Activated T-helper 1 cell treated with anti-CD3 and anti-CD28 coated beads, Interleukin-12 subunit alpha, Interleukin-12 subunit beta, Interleukin-2, Interleukin-4 antibody, amounts not matched to agents 30 ng/mL and 10 ng/mL and 1 ng/mL, durations not matched to agents 14 hours and 24 hours and 36 hours (primary cell): ENCODE measurements at regions of chr15 and their contacts with region 1.

Region 1: GRCh38 chr15:98518823-98519561 is 129.3 kb upstream of the IGF1R start:
- DNase-seq: peak; percentile 14
- H3K4me3 Mint-ChIP-seq: no peak overlapping the region
- H3K27ac Mint-ChIP-seq: no peak overlapping the region
- H3K4me1 Mint-ChIP-seq: peaks cover 6% of the 10 kb centered on the region
- H3K27me3 Mint-ChIP-seq: peaks cover 7% of the 10 kb centered on the region

Region 2: GRCh38 chr15:98442379-98442833 is 76.6 kb before region 1 on chr15:
- intact Hi-C with region 1: loop called (anchors 5 kb)
- DNase-seq: peak; percentile 34
- H3K4me3 Mint-ChIP-seq: no peak overlapping the region
- H3K27ac Mint-ChIP-seq: no peak overlapping the region
- H3K4me1 Mint-ChIP-seq: peaks cover 5% of the 10 kb centered on the region
- H3K27me3 Mint-ChIP-seq: peaks cover 5% of the 10 kb centered on the region

Region 3: GRCh38 chr15:98658831-98659699 is 140.1 kb after region 1 on chr15:
- intact Hi-C with region 1: loop called (anchors 1 kb)
- DNase-seq: peak; percentile 9
- H3K4me3 Mint-ChIP-seq: no peak overlapping the region
- H3K27ac Mint-ChIP-seq: no peak overlapping the region
- H3K4me1 Mint-ChIP-seq: peaks cover 5% of the 10 kb centered on the region
- H3K27me3 Mint-ChIP-seq: peaks cover 13% of the 10 kb centered on the region

Region 4: DNA sequence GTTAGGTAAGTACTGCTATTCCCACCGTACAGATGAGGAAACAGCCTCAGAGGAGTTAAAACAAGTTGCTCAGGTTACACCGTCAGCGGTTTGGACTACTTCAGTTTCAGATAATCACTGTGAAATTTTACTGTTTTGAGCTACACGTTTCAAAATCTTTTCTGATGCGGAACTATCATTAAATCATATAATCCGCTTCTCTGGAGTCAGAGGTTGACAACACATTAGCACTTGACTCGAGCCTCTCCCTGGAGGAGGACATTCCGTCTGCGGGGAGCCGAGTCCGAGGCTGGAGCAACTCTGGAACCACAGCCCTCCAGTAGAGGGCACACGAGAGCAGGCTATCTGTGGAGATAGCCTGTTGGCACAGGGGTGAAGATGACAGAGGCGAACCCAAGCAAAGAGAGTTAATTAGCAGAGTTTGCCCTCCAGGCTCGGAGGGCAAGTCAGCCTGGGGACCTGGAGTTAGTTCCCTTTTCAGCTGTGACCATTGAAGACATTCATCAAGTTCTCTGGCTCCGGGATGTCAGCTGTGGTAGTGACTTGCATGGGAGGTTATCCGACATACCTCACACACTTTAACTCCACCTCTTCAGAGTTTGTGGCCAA is 260.6 kb after region 1 on chr15:
- intact Hi-C with region 1: loop called (anchors 1 kb)
- DNase-seq: peak; percentile 49
- H3K4me3 Mint-ChIP-seq: peak overlapping the region; percentile 30
- H3K27ac Mint-ChIP-seq: no peak overlapping the region
- H3K4me1 Mint-ChIP-seq: peaks cover 28% of the 10 kb centered on the region
- H3K27me3 Mint-ChIP-seq: peaks cover 5% of the 10 kb centered on the region

Region 5: GRCh38 chr15:98881526-98882520 is 362.8 kb after region 1 on chr15:
- intact Hi-C with region 1: loop called (anchors 1 kb)
- DNase-seq: no peak
- H3K4me3 Mint-ChIP-seq: no peak overlapping the region
- H3K27ac Mint-ChIP-seq: no peak overlapping the region
- H3K4me1 Mint-ChIP-seq: peaks cover 3% of the 10 kb centered on the region
- H3K27me3 Mint-ChIP-seq: no peaks in the 10 kb centered on the region

Region 6: DNA sequence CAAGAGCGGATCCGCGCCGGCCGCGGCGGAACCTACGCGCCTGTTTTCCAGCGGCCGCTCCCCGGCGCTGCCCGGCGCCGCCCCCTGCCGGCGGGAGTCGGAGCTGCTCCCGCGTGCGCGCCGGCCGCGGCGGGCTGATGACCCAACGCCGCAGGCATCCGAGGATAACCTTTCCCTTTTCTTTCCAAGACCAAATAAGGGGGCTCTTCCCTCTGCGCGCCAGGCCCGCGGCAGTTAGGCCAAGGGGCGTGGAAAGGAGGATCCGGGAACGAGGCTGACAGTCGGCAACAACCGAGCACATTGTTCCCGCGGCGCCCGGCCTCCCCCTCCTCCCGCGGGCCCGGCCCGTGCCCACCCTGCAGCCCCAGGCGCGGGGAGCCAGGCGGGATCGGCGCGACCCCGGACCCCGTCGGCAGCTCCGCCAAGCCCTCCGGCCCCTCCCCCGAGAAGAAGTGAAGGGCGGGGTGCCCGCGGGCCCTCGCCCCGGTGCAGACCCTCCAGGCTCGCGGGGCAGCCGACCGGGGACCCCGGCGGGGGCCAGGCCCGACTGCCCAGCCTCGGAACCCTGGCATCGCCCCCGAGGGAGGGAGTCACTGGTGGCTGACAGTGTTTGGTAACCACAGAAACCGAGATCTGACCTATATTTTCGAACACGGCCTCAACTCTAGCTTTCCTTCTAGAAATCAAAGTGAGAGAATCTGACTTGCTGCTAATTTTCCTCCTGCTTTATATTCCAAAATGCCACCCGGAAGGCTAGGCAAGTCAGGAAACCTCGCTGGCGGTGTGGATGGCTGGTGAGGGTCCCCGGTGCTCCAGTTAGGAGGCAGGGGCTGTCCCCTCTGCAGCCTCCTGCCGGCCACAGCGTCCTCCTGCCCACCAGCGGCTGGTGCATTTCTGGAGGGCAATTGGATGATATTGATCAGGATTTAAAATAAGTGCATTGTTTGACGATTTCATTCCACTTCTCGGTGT is 540.3 kb after region 1 on chr15:
- intact Hi-C with region 1: loop called (anchors 5 kb)
- DNase-seq: peak; percentile 48
- H3K4me3 Mint-ChIP-seq: peak overlapping the region; percentile 70
- H3K27ac Mint-ChIP-seq: no peak overlapping the region
- H3K4me1 Mint-ChIP-seq: peaks cover 8% of the 10 kb centered on the region
- H3K27me3 Mint-ChIP-seq: peaks cover 29% of the 10 kb centered on the region

Region 7: GRCh38 chr15:99076552-99077308 is 557.7 kb after region 1 on chr15:
- intact Hi-C with region 1: loop called (anchors 1 kb)
- DNase-seq: peak; percentile 31
- H3K4me3 Mint-ChIP-seq: peak overlapping the region; percentile 77
- H3K27ac Mint-ChIP-seq: no peak overlapping the region
- H3K4me1 Mint-ChIP-seq: peaks cover 7% of the 10 kb centered on the region
- H3K27me3 Mint-ChIP-seq: peaks cover 11% of the 10 kb centered on the region